Astrocyte of the cerebellum (primary cell): ENCODE measurements at regions of chr6 and their contacts with region 1.

Region 1: DNA sequence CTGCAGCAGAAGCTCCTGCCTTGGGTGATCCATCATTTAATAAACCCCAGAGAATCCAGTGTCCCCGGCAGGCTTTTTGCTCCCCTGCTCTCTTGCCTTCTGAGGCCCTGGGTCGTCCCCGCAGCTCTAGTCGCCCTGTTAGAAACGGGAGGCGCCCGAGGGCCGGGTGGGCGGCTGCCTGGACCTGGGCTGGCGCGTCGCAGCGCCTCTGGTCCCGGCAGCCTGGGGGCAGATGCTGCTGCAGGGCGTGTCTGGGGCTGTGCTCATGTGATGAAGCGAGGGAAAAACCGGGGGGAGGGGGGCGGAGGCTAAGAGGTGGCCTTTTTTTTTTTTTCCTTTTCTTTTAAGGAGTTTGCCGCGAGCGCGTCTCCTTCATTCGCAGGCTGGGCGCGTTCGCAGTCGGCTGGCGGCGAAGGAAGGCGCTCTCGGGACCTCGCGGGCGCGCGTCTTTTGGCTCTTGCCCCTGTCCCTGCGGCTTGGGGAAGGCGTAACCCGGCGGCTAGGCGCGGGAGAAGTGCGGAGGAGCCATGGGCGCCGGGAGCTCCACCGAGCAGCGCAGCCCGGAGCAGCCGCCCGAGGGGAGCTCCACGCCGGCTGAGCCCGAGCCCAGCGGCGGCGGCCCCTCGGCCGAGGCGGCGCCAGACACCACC is 394 bp downstream of the AKAP12 start:
- DNase-seq: peak; percentile 62
- H3K4me3 ChIP-seq: peak overlapping the region; percentile 87
- CTCF ChIP-seq: no peak

Region 2: GRCh38 chr6:151300267-151300991 is 60.3 kb after region 1 on chr6:
- in situ Hi-C with region 1: loop called (anchors 5 kb)
- DNase-seq: no peak
- H3K4me3 ChIP-seq: no peak overlapping the region
- CTCF ChIP-seq: no peak

Region 3: DNA sequence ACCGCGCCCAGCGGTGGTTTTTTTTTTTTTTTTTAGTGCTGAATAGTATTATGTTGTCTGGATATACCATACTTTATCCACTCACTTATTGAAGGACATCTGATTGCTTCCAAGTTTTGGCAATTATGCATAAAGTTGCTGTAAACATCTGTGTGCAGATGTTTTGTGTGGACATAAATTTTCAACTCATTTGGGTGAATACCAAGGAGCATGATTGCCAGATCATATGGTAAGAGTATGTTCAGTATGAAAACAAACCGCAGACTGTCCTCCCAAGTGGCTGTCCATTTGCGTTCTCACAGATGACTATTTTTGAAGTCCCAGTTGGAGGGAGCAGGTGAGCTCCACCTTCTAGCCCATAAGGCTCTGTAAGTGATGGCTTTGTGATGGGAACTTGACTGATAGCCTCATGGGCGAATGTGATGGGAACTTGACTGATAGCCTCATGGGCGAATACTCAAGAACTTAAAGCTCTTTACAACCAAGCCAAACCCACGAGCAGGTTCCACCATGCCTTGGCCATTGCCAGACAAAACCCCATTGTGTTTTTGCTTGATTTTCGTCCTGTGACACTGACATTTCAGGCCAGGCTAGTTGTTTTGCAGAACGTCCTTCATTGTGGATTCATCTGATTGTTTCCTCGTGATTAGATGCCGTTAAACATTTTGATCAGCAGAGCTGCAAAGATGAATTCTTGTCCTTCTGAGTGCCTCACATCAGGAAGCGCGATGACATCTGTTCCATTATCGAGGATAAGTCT is 100.2 kb after region 1 on chr6:
- in situ Hi-C with region 1: no loop called
- DNase-seq: no peak
- H3K4me3 ChIP-seq: no peak overlapping the region
- CTCF ChIP-seq: no peak